Gastrocnemius medialis (tissue), 4 donors: ENCODE measurements at regions of chr3 and their contacts with region 1.

Region 1: DNA sequence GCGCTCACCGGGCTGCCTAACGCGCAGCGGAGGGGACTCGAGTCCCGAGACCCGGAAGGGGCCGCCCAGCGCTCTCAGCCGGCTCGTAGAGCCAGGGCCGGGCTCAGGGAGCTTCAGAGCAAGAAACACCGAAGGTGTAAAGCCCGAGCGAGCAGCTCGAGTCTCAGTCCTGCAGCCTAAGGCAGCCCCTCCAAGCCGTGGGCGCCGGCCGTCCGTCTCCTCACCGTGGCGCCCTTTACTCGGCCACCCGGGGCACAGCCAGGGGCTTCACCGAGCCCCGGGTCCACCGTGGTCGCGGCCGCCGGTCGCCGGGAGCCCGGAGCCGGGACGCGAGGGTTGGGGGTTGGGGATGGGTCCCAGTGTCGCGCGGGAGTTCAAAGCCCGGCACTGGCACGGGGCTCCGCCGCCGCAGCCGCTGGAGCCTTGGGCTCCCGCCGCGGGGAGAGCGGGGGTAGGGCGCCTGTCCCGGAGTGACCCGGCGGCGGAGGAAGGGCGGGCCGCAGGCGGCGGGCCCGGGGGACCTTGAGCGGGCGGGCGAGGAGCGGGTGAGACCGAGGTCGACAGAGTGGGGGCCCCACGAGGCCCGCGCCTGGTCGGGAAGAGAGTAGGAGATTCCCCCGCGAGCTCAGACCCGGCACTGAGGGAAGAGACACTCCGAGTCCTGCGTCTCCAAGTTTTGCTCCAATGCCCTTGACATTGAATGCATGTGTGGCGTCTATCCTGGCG is 26.9 kb upstream of the THRB start:
- DNase-seq: peak in 1 of 2 donors; percentile 47
- ATAC-seq: peak; percentile 82 to 87
- H3K4me3 ChIP-seq: peak overlapping the region; percentile 71 to 94 (median 80)
- H3K27ac ChIP-seq: peak overlapping the region; percentile 80 to 92 (median 86)
- H3K4me1 ChIP-seq: peaks cover 17 to 18% of the 10 kb centered on the region in 2 donors
- H3K27me3 ChIP-seq: no peaks in the 10 kb centered on the region
- CTCF ChIP-seq: peak in 3 of 5 experiments; percentile 25 to 36 (median 31)
- POLR2A ChIP-seq: no peak

Region 2: DNA sequence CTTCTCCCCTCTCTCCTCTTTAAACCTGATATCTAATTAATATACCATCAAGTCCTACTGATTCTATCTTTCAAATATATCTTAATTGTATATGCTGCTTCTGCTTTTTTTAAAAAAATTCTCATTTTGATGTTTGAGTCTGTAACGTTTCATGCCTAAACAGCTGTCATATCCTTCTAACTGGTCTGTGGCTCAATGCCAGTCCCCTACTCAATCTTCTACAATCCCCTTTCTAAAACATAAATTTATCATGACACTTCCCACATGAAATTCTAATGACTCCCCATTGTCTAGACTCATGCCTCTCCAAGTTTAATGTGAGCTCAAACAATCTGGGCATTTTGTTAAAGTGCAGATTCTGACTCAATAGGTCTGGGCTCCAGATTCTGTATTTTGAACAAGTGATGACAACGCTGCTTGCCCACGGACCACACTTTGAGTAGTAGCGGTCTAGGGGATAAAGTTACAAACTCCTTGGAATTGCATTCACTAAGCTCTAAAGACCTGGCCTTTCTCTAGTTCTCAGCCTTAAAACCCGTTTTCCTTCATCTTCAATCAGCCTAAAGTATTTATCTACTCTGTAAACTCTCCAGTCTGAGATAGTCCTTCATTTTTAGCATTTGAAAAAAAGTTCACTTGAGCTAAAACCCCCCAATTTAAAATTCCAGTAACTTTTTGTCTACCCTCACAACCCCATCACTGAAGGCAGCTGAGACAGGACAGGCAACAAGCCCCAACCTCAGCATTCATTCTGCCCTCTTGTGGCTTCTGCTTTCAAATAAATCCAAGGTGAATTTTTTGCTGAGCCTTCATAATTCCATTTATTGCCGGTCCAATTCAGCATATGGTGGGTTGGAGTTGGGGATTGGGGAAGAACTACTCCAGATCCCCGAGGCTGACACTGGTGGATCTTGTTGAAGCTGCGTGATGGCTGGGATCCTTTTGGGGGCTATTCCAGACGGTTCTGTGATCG is 61.1 kb after region 1 on chr3:
- in situ Hi-C with region 1: no loop called
- intact Hi-C with region 1: loop called (anchors 2 kb)
- DNase-seq: peak; percentile 6 to 14
- ATAC-seq: peak; percentile 73 to 79
- H3K4me3 ChIP-seq: no peak overlapping the region
- H3K27ac ChIP-seq: no peak overlapping the region
- H3K4me1 ChIP-seq: peaks cover 0 to 6% of the 10 kb centered on the region in 2 donors
- H3K27me3 ChIP-seq: no peaks in the 10 kb centered on the region
- CTCF ChIP-seq: peak; percentile 20 to 53 (median 41)
- POLR2A ChIP-seq: no peak

Region 3: DNA sequence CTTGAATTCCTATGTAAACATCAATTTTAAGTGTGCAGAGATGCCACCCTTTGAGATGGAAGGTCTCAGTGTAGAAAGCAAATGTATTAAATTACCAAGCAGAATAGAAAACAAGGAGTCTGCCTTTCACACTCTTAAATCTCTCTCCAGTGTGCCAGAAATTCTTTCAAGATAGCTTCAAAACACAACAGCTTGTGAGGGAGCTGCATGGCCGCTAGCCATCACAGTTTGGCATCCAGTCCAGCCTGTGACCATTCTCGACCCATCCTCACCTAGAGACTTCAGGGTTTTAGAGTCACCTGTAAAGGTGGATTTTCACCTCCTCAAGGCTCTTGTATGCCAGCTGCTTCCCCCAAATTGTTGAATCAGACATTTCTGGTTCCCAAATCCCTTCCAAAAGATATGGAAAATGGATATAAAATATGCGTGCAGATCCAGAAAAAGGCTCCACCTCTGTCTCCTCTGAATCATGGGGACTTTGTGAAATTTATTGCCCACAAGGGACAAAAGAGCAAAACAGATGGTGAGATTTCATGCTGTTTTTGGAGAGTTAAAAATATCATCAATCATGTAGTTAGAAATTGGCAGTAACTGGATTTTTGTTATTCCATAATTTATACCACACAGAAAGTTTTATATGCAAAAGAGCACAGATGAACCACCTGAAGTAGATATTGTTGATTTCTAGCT is 87.3 kb after region 1 on chr3:
- in situ Hi-C with region 1: no loop called
- intact Hi-C with region 1: no loop called
- DNase-seq: peak in 1 of 2 donors; percentile 16
- ATAC-seq: no peak
- H3K4me3 ChIP-seq: no peak overlapping the region
- H3K27ac ChIP-seq: no peak overlapping the region
- H3K4me1 ChIP-seq: no peaks in the 10 kb centered on the region
- H3K27me3 ChIP-seq: no peaks in the 10 kb centered on the region
- CTCF ChIP-seq: no peak
- POLR2A ChIP-seq: no peak

Region 4: GRCh38 chr3:24686808-24687207 is 165.2 kb after region 1 on chr3:
- in situ Hi-C with region 1: no loop called
- intact Hi-C with region 1: loop called (anchors 5 kb)
- DNase-seq: no peak
- ATAC-seq: no peak
- H3K4me3 ChIP-seq: no peak overlapping the region
- H3K27ac ChIP-seq: no peak overlapping the region
- H3K4me1 ChIP-seq: peaks cover 22 to 28% of the 10 kb centered on the region in 2 donors
- H3K27me3 ChIP-seq: no peaks in the 10 kb centered on the region
- CTCF ChIP-seq: no peak
- POLR2A ChIP-seq: no peak

Region 5: DNA sequence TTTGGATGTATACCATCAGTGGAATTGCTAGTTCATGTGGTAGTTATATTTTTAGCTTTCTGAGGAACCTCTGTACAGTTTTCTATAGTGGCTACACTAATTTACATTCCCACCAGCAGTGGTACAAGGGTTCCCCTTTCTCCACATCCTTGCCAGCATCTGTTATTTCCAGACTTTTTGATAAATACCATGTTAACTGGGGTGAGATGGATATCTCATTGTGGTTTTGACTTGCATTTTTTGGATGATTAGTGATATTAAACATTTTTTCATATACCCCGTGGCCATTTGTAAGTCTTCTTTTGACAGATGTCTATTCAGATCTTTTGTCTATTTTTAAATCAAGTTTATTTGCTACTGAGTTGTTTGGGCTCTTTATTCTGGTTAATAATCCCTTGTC is 450.9 kb after region 1 on chr3:
- in situ Hi-C with region 1: no loop called
- intact Hi-C with region 1: no loop called
- DNase-seq: no peak
- ATAC-seq: no peak
- H3K4me3 ChIP-seq: no peak overlapping the region
- H3K27ac ChIP-seq: no peak overlapping the region
- H3K4me1 ChIP-seq: no peaks in the 10 kb centered on the region
- H3K27me3 ChIP-seq: no peaks in the 10 kb centered on the region
- CTCF ChIP-seq: no peak
- POLR2A ChIP-seq: no peak